ENCODE measurements at regions of chr3 and their contacts with region 1.

Region 1: DNA sequence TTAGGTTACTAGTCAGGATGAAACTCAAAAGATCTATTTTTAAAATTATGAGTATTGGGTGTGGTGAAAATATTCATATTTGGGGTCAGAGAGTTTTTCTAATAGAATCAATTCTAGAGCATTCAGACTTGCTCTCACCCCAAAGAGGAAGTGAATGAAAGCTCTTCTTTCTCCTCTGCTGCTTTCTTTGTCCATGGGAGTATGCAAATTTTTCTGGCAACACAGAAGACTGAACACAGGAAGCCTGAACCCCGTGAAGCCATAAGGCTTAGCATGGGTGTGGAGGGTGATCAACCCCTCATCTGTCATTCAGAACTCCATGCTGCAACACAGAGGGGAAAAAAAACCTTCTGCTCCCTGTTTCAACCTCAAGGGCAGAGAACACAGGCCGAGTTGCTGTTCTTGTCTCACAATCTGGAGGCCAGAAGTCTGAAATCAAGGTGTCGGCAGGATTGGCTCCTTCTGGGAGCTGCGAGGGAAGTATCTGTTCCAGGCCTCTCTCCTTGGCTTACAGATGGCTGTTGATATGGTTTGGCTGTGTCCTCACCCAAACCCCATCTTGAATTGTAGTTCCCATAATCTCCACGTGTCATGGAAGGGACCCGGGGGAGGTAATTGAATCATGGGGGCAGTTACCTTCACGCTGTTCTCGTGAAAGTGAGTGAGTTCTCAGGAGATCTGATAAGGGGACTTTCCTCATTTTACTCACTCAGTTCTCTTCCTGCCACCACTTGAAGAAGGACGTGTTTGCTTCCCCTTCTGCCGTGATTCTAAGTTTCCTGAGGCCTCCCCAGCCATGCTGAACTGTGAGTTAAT is 33.7 kb upstream of the CD47 start:
- DNase-seq: peak; percentile 61
- ATAC-seq: peak; percentile 64
- H3K4me3 Mint-ChIP-seq: peak overlapping the region; percentile 83
- H3K27ac Mint-ChIP-seq: peak overlapping the region; percentile 100
- H3K4me1 Mint-ChIP-seq: peaks cover 91% of the 10 kb centered on the region
- H3K27me3 Mint-ChIP-seq: no peaks in the 10 kb centered on the region
- CTCF ChIP-seq: no peak

Region 2: GRCh38 chr3:108079877-108080659 is 44.5 kb before region 1 on chr3:
- CTCF ChIA-PET with region 1: no interaction called
- POLR2A ChIA-PET with region 1: interaction called, 211 read pairs
- intact Hi-C with region 1: no loop called
- DNase-seq: no peak
- ATAC-seq: no peak
- H3K4me3 Mint-ChIP-seq: no peak overlapping the region
- H3K27ac Mint-ChIP-seq: peak overlapping the region; percentile 26
- H3K4me1 Mint-ChIP-seq: peaks cover 25% of the 10 kb centered on the region
- H3K27me3 Mint-ChIP-seq: no peaks in the 10 kb centered on the region
- CTCF ChIP-seq: no peak

Region 3: DNA sequence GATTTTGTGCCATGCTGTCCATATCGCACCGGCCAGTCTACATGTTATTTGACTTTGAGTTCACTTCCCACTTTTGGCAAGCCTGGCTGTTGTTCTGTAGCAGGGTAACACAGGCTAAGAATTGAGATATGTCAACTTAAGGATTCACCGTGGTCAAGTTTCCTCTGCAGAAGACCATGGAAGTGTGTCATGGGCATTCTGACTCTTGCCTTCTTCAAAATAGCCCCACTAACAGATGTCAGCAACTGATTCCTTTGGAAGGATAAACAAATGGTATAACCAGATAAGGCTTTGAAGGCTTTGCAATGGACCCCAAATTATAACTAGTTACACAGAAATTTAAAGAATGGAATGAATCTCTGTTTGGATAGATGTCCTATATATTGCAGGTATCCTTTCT is 13.6 kb before region 1 on chr3:
- CTCF ChIA-PET with region 1: interaction called, 3 read pairs
- POLR2A ChIA-PET with region 1: interaction called, 188 read pairs
- intact Hi-C with region 1: loop called (anchors 1 kb)
- DNase-seq: no peak
- ATAC-seq: no peak
- H3K4me3 Mint-ChIP-seq: no peak overlapping the region
- H3K27ac Mint-ChIP-seq: no peak overlapping the region
- H3K4me1 Mint-ChIP-seq: peaks cover 13% of the 10 kb centered on the region
- H3K27me3 Mint-ChIP-seq: no peaks in the 10 kb centered on the region
- CTCF ChIP-seq: no peak

Region 4: GRCh38 chr3:108221911-108222852 is 97.6 kb after region 1 on chr3 and contains the start of gene IFT57:
- CTCF ChIA-PET with region 1: interaction called, 4 read pairs
- POLR2A ChIA-PET with region 1: interaction called, 75 read pairs
- intact Hi-C with region 1: loop called (anchors 1 kb)
- DNase-seq: peak; percentile 95
- ATAC-seq: peak; percentile 91
- H3K4me3 Mint-ChIP-seq: peak within 1 kb of the TSS; percentile 100
- H3K27ac Mint-ChIP-seq: peak within 1 kb of the TSS; percentile 100
- H3K4me1 Mint-ChIP-seq: peaks cover 66% of the 10 kb centered on the region
- H3K27me3 Mint-ChIP-seq: no peaks in the 10 kb centered on the region
- CTCF ChIP-seq: no peak
- total RNA-seq, gene IFT57: 63.2 and 64.9 TPM in 2 replicates

Region 5: DNA sequence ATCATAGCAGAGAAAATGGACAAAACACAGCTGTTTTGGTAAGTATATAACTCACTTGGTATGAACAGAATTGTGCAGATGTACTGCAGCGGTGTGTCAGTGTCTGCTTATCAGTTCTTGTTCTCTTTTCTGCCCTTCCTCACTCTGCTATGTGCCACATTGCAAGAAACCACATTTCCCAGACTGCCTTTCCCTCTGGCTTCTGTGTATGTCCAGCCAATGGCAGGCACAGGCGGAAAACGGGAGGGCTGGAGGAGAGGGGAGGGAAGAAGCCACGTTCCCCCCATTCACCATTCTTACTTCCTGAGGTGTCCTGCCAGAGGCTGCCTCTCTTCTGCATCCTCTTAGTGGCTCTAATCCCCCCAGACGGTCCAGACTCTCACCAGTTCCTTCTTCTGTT is 187.3 kb after region 1 on chr3:
- CTCF ChIA-PET with region 1: no interaction called
- POLR2A ChIA-PET with region 1: no interaction called
- intact Hi-C with region 1: no loop called
- DNase-seq: no peak
- ATAC-seq: no peak
- H3K4me3 Mint-ChIP-seq: no peak overlapping the region
- H3K27ac Mint-ChIP-seq: no peak overlapping the region
- H3K4me1 Mint-ChIP-seq: peaks cover 5% of the 10 kb centered on the region
- H3K27me3 Mint-ChIP-seq: peaks cover 2% of the 10 kb centered on the region
- CTCF ChIP-seq: no peak

Region 6: GRCh38 chr3:108406661-108407206 is 282.2 kb after region 1 on chr3:
- CTCF ChIA-PET with region 1: interaction called, 6 read pairs
- POLR2A ChIA-PET with region 1: interaction called, 4 read pairs
- intact Hi-C with region 1: loop called (anchors 1 kb)
- DNase-seq: no peak
- ATAC-seq: peak; percentile 87
- H3K4me3 Mint-ChIP-seq: peak overlapping the region; percentile 35
- H3K27ac Mint-ChIP-seq: peak overlapping the region; percentile 87
- H3K4me1 Mint-ChIP-seq: peaks cover 28% of the 10 kb centered on the region
- H3K27me3 Mint-ChIP-seq: no peaks in the 10 kb centered on the region
- CTCF ChIP-seq: no peak